OCI-LY7 (cell line): ENCODE measurements at regions of chr5 and their contacts with region 1.

Region 1: GRCh38 chr5:10701567-10702039 is 59.4 kb downstream of the DAP start:
- DNase-seq: peak; percentile 61
- H3K4me3 ChIP-seq: no peak overlapping the region
- H3K27ac ChIP-seq: peak overlapping the region; percentile 95
- H3K4me1 ChIP-seq: peaks cover 64% of the 10 kb centered on the region
- CTCF ChIP-seq: peak; percentile 76

Region 2: DNA sequence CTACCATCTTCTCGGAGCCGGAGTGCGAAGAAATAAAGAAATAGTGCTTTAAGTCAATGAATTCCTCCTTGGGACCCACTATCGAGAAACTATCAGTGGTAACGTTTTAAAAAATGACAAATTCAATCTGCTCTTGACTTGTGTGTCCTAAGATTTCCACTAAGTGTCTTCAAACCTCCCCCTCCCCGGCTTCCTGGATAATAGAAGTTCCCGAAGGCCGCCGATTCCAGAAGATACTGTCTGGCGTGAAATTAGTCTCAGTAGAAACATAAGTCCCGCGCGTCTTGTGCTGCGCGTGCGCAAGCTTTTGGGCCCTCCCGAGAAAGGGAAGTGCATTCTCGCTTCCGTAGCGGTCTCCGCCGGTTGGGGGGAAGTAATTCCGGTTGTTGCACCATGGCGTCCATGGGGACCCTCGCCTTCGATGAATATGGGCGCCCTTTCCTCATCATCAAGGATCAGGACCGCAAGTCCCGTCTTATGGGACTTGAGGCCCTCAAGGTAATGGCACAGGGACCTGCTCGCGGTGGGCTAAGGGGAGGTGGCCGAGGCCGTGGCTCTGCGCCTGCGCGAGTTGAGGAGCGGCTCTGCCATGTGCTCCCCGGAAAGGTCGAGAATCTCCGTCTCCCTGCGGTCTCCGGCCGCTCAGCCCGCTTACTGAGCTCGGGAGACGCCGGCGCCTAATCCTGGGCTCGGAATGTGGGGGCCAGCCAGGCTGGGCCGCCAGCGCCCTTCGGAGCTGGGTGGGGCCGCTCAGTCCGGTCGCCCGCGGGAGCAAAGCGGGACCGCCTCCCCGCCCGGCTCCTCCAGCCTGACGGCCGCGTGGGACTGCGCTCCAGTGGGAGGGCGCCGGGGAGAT is 451.4 kb before region 1 on chr5 and contains the start of gene CCT5:
- CTCF ChIA-PET with region 1: no interaction called
- POLR2A ChIA-PET with region 1: interaction called, 3 read pairs
- intact Hi-C with region 1: loop called (anchors 1 kb)
- DNase-seq: peak; percentile 99
- H3K4me3 ChIP-seq: peak within 1 kb of the TSS; percentile 96
- H3K27ac ChIP-seq: peak within 1 kb of the TSS; percentile 72
- H3K4me1 ChIP-seq: peaks cover 35% of the 10 kb centered on the region
- CTCF ChIP-seq: no peak
- total RNA-seq, gene CCT5: 498 and 551 TPM in 2 replicates

Region 3: GRCh38 chr5:10452768-10453331 is 248.8 kb before region 1 on chr5:
- CTCF ChIA-PET with region 1: no interaction called
- POLR2A ChIA-PET with region 1: no interaction called
- intact Hi-C with region 1: loop called (anchors 2 kb)
- DNase-seq: peak; percentile 82
- H3K4me3 ChIP-seq: no peak overlapping the region
- H3K27ac ChIP-seq: no peak overlapping the region
- H3K4me1 ChIP-seq: peaks cover 5% of the 10 kb centered on the region
- CTCF ChIP-seq: peak; percentile 94

Region 4: DNA sequence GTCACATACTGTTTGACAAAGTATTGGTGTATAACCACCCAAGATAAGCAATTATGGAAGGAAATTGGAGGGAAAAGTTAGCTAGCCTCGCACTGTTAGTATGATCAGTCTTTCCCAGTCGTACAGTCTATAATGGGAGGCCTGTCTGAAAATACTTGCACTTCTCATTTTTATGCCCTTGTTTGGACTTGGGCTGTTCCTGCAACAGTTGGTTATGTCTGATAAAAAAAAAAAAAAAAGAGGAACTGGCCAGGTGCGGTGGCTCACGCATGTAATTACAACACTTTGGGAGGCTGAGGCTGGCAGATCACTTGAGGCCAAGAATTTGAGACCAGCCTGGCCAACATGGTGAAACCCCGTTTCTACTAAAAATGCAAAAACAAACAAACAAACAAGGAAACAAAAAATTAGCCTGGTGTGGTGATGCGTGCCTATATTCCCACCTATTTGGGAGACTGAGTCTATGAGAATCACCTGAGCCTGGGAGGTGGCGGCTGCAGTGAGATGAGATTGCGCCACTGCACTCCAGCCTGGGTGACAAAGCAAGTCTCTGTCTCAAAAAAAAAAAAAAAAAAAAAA is 196.0 kb before region 1 on chr5:
- CTCF ChIA-PET with region 1: no interaction called
- POLR2A ChIA-PET with region 1: no interaction called
- intact Hi-C with region 1: no loop called
- DNase-seq: peak; percentile 86
- H3K4me3 ChIP-seq: no peak overlapping the region
- H3K27ac ChIP-seq: peak overlapping the region; percentile 43
- H3K4me1 ChIP-seq: peaks cover 25% of the 10 kb centered on the region
- CTCF ChIP-seq: no peak

Region 5: DNA sequence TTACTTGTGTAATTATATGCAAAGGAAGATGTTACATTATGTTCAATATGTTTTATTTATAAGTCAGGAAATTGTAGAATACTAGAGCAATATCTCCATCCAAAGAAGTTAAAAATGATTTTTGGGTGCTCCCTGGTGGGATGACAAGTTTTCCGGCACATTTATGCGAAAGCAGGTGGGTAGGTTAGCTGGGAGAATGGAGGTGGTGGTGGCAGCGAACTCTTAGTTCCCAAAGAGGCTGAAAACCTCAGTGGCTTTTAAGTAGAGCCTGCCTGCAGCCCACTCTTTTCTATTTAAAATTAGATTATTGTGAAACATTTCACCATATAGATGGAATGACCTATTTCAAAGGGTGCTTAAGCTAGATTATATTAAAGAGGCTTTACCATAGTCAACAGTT is 85.9 kb before region 1 on chr5:
- CTCF ChIA-PET with region 1: no interaction called
- POLR2A ChIA-PET with region 1: no interaction called
- intact Hi-C with region 1: no loop called
- DNase-seq: no peak
- H3K4me3 ChIP-seq: no peak overlapping the region
- H3K27ac ChIP-seq: no peak overlapping the region
- H3K4me1 ChIP-seq: peaks cover 53% of the 10 kb centered on the region
- CTCF ChIP-seq: no peak

Region 6: DNA sequence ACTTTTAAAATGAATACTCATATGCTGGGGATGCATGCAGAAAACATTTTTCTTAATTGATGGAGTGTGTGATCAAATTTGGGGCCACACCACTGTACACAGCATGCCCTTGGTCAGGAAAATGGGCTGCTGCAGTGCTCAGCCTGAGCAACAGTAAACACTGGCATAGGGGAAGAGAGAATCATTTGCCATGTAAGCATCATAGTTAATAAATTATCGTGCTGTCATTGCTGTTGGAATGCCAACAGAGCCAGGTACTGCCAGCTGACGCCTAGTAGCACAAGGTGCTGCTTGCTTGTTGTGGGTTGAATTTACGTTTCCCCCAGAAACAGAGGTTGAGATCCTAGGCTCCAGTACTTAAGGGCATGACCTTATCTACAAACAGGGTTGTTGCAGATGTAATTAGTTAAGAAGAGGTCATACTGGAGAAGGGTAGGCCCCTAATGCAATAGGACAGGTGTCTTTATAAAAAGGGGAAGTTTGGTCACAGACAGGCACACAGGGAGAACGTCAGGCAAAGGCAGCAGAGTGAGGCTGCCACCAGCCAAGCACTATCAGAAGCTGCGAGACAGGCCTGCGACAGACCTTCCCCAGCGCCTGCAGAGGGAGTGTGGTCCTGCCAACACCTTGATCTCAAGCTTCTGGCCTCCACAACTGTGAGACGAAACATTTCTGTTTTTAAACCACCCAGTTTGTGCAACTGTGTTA is 34.1 kb after region 1 on chr5:
- CTCF ChIA-PET with region 1: no interaction called
- POLR2A ChIA-PET with region 1: no interaction called
- intact Hi-C with region 1: loop called (anchors 2 kb)
- DNase-seq: peak; percentile 85
- H3K4me3 ChIP-seq: no peak overlapping the region
- H3K27ac ChIP-seq: peak overlapping the region; percentile 46
- H3K4me1 ChIP-seq: peaks cover 18% of the 10 kb centered on the region
- CTCF ChIP-seq: no peak

Region 7: DNA sequence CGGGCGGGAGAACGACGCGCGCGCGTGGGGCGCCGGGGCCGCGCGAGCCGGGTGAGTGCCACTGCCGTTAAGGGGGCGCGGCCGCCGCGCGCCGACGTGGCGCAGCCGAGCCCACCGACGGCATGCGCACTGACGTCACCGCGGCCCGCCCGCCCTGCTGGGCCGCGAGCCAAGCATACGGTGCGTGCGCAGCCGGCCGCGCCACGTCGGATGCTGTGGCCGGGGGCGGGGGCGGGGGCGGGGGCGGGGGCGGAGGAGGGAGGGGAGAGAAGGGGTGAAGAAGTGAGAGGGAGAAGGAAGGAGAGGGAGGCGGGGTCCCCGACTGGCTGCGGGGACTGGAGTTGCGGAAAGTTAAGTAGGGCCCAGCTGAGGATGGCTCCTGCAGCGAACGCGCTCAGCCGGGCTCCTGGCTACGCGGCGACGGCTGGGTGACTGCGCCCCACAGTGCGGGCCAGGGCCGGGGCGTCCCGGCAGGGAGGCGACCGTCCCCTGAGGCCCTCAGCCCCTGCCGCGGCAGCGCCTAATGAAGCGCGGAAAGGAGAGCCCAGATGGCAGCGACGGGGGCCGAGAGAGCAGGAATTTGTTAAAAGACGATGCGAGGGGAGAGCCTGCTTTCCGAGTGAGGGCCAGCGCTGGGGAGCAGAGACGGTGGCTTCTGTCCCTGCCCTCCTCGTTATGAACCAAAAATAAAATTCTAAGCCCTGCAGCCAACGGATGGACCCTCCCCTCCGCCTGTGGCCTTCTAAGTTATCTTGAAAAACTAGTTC is 59.7 kb after region 1 on chr5 and contains the start of gene DAP:
- CTCF ChIA-PET with region 1: interaction called, 3 read pairs
- POLR2A ChIA-PET with region 1: interaction called, 4 read pairs
- intact Hi-C with region 1: loop called (anchors 1 kb)
- DNase-seq: peak; percentile 95
- H3K4me3 ChIP-seq: peak within 1 kb of the TSS; percentile 85
- H3K27ac ChIP-seq: peak within 1 kb of the TSS; percentile 75
- H3K4me1 ChIP-seq: peaks cover 44% of the 10 kb centered on the region
- CTCF ChIP-seq: no peak
- total RNA-seq, gene DAP: 15.9 and 21.5 TPM in 2 replicates

Region 8: DNA sequence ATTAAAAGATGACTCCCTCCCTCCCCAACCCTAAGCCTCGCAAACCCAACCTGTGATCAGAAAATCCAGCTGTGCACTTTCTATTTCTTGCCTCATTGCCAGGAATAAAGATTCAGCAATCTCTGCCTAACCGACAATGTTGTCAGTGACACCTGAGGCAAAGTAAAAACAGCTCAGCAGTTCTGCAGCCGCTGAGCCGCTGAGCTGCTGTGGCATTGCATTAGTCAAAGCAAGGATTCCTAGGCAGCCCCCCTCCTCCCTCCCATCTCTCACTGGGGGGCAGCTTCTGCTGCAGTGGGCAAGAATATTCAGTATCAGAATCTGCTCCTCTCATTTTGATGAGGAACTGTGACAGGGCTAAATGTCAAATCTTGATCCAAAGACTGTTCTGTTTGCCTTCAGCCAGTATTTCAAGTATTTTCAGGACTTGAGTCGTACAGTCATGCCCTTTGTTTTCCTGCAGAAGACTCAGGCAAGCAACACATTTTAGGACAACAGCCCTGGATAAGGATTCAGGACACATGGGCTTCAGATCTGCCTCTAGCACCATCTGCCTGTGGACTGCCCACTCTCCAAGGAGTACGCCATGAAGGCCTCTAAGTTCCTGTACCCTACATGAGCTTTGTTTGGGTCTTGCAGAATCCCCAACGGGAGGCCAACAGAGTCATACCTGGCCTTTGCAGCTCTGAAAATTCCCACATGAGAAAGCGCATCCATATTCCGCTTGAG is 100.5 kb after region 1 on chr5:
- CTCF ChIA-PET with region 1: no interaction called
- POLR2A ChIA-PET with region 1: no interaction called
- intact Hi-C with region 1: no loop called
- DNase-seq: no peak
- H3K4me3 ChIP-seq: no peak overlapping the region
- H3K27ac ChIP-seq: no peak overlapping the region
- H3K4me1 ChIP-seq: no peaks in the 10 kb centered on the region
- CTCF ChIP-seq: no peak